Mammary epithelial cell (primary cell): ENCODE measurements at regions of chr15 and their contacts with region 1.

Region 1: GRCh38 chr15:44788748-44789147 is 52.4 kb downstream of the TRIM69 start:
- DNase-seq: no peak
- H3K4me3 ChIP-seq: no peak overlapping the region
- H3K27ac ChIP-seq: no peak overlapping the region
- H3K4me1 ChIP-seq: peaks cover 3% of the 10 kb centered on the region
- H3K27me3 ChIP-seq: no peaks in the 10 kb centered on the region
- CTCF ChIP-seq: no peak

Region 2: DNA sequence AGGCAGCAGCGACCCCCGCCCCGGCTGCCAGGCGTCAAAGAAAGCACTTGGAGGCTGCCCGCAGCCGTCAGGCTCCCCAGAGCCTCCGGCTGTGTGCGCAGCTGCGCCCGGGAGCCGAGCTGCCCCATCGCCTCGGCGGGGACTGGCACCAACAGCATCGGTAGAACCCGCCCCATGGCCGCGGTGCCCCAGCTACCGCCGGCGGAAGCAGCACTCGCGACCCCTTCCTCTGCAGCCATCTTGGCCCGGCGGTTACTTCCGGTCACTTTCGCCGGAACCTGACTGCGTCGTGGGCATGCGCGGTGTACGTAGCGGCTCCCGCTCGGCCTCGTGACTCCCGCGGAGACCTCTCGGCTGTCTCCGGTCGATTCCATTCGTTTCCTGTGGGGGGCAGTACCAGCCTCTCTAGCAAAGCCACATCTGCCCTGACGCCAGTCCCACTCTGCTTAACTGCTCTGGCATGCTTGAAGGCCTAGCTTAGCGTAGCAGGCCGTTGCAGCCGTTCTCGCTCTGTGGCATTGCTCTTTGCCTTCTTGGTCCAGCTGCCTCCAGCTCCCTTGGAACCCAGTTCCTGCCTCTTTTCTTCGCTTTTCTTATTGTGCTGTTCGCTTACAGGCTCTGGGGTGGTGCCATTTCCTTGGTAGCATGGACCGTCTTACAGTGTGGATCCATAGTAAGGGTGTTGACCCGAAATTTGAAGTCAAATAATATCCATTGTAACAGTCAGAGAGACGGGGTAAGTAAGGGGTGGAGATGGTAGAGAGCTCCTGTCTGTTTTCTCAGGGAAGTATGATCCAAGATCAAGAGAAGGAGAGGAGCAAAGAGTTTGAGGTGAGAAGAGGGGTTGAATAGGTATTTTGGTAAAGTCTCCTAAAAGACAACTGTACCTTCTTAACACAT is 125.1 kb before region 1 on chr15 and contains the start of gene SPG11:
- CTCF ChIA-PET with region 1: no interaction called
- dilution Hi-C with region 1: loop called (anchors 5 kb)
- in situ Hi-C with region 1: no loop called
- intact Hi-C with region 1: no loop called
- DNase-seq: peak; percentile 94
- H3K4me3 ChIP-seq: peak within 1 kb of the TSS; percentile 67 to 89 (median 82)
- H3K27ac ChIP-seq: peak within 1 kb of the TSS; percentile 58
- H3K4me1 ChIP-seq: peaks cover 15% of the 10 kb centered on the region
- H3K27me3 ChIP-seq: no peaks in the 10 kb centered on the region
- CTCF ChIP-seq: peak; percentile 80 to 82
- total RNA-seq, gene SPG11: 55.4 to 76.2 TPM

Region 3: GRCh38 chr15:44882499-44882968 is 93.8 kb after region 1 on chr15:
- CTCF ChIA-PET with region 1: no interaction called
- dilution Hi-C with region 1: no loop called
- in situ Hi-C with region 1: no loop called
- intact Hi-C with region 1: no loop called
- DNase-seq: peak; percentile 77
- H3K4me3 ChIP-seq: no peak overlapping the region
- H3K27ac ChIP-seq: peak overlapping the region; percentile 49
- H3K4me1 ChIP-seq: peaks cover 17% of the 10 kb centered on the region
- H3K27me3 ChIP-seq: no peaks in the 10 kb centered on the region
- CTCF ChIP-seq: no peak

Region 4: DNA sequence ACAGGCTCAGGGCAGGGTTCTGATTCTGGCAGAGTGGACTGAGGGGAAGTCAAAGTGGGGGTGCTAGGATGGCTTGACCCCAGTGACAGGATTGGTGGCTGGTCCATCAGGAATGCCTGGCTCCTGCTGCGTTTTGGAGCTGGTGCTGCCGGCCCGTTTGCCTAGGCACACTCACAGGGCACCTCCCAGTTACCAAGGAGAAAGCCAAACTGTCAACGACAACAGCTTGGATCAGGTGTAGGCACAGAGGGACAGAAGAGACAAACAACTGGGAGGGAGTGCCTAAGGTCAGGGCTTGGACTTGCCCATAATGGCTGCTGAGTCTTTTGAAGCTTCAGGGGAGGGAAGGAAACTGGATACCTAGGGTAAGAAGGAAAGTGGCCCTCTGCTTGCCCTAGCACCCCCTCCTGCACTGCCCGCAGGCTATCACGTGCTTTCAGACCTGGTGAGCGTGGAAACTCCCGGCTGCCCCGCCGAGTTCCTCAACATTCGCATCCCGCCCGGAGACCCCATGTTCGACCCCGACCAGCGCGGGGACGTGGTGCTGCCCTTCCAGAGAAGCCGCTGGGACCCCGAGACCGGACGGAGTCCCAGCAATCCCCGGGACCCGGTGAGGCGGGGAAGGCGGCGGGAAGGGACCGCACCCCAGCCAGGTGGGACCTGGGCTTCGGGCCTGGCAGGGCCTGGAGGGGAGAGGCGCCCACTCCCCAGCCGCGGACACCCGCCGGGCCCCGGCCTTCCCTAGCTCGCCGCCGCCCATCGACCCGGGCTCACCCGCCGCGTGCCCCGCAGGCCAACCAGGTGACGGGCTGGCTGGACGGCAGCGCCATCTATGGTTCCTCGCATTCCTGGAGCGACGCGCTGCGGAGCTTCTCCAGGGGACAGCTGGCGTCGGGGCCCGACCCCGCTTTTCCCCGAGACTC is 346.2 kb after region 1 on chr15:
- CTCF ChIA-PET with region 1: no interaction called
- dilution Hi-C with region 1: no loop called
- in situ Hi-C with region 1: no loop called
- intact Hi-C with region 1: no loop called
- DNase-seq: no peak
- H3K4me3 ChIP-seq: no peak overlapping the region
- H3K27ac ChIP-seq: no peak overlapping the region
- H3K4me1 ChIP-seq: peaks cover 21% of the 10 kb centered on the region
- H3K27me3 ChIP-seq: no peaks in the 10 kb centered on the region
- CTCF ChIP-seq: no peak

Region 5: DNA sequence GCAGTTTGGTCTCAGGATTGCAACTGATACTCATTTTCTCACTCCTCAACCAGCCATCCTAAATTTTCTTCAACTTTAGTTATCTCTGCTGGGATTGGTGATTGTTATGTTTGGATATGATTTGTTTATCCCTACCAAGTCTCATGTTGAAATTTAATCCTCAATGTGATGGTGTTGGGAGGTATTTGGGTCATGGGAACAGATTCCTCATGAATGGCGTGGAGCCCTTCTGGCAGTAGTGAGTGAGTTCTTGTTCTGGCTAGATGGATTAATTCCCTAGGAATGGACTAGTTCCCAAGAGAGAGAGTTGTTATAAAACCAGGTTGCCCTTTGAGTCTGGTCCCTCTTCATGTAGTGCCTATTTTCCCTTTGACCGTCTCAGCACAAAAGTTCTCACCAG is 1246.0 kb after region 1 on chr15:
- CTCF ChIA-PET with region 1: no interaction called
- dilution Hi-C with region 1: no loop called
- in situ Hi-C with region 1: no loop called
- intact Hi-C with region 1: no loop called
- DNase-seq: no peak
- H3K4me3 ChIP-seq: no peak overlapping the region
- H3K27ac ChIP-seq: no peak overlapping the region
- H3K4me1 ChIP-seq: no peaks in the 10 kb centered on the region
- H3K27me3 ChIP-seq: no peaks in the 10 kb centered on the region
- CTCF ChIP-seq: no peak